Activated CD8-positive, alpha-beta T cell treated with anti-CD3 and anti-CD28 coated beads for 36 hours (primary cell): ENCODE measurements at regions of chr11 and their contacts with region 1.

Region 1: GRCh38 chr11:128630367-128631230 is 43.2 kb upstream of the ETS1 start:
- DNase-seq: peak; percentile 94
- ATAC-seq: peak; percentile 71
- H3K4me3 Mint-ChIP-seq: peak overlapping the region; percentile 72
- H3K27ac Mint-ChIP-seq: peak overlapping the region; percentile 97
- H3K4me1 Mint-ChIP-seq: peaks cover 66% of the 10 kb centered on the region
- H3K27me3 Mint-ChIP-seq: no peaks in the 10 kb centered on the region
- CTCF ChIP-seq: peak; percentile 72

Region 2: GRCh38 chr11:128172046-128172878 is 458.3 kb before region 1 on chr11:
- CTCF ChIA-PET with region 1: interaction called, 139 read pairs
- POLR2A ChIA-PET with region 1: interaction called, 3 read pairs
- intact Hi-C with region 1: loop called (anchors 1 kb)
- DNase-seq: peak; percentile 96
- ATAC-seq: peak; percentile 81
- H3K4me3 Mint-ChIP-seq: no peak overlapping the region
- H3K27ac Mint-ChIP-seq: no peak overlapping the region
- H3K4me1 Mint-ChIP-seq: peaks cover 16% of the 10 kb centered on the region
- H3K27me3 Mint-ChIP-seq: no peaks in the 10 kb centered on the region
- CTCF ChIP-seq: peak; percentile 69

Region 3: GRCh38 chr11:128290106-128290840 is 340.3 kb before region 1 on chr11:
- CTCF ChIA-PET with region 1: interaction called, 91 read pairs
- POLR2A ChIA-PET with region 1: interaction called, 23 read pairs
- intact Hi-C with region 1: loop called (anchors 2 kb)
- DNase-seq: peak; percentile 87
- ATAC-seq: peak; percentile 62
- H3K4me3 Mint-ChIP-seq: peak overlapping the region; percentile 83
- H3K27ac Mint-ChIP-seq: peak overlapping the region; percentile 95
- H3K4me1 Mint-ChIP-seq: peaks cover 94% of the 10 kb centered on the region
- H3K27me3 Mint-ChIP-seq: no peaks in the 10 kb centered on the region
- CTCF ChIP-seq: peak; percentile 88

Region 4: DNA sequence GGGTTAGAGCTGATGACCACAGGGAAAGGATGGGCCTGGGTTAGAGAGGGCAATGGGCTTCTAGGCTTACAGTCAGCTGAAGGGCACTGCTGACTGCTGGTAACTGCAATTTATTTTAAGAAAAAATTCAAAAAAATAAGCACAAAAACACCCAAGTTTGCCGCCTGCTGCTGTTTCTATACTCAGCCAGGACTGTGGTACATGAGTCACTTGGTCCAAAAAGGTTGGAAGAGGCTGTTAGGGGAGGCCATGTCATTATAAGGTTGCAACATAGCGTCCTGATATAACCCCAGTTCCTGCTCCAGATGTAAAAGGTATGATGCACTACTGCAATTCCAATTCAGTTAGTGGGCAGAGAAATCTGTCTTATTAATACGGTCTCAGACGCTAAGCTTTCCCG is 142.1 kb before region 1 on chr11:
- CTCF ChIA-PET with region 1: interaction called, 7 read pairs
- POLR2A ChIA-PET with region 1: interaction called, 12 read pairs
- intact Hi-C with region 1: no loop called
- DNase-seq: peak; percentile 69
- ATAC-seq: peak; percentile 63
- H3K4me3 Mint-ChIP-seq: peak overlapping the region; percentile 47
- H3K27ac Mint-ChIP-seq: peak overlapping the region; percentile 98
- H3K4me1 Mint-ChIP-seq: peaks cover 94% of the 10 kb centered on the region
- H3K27me3 Mint-ChIP-seq: no peaks in the 10 kb centered on the region
- CTCF ChIP-seq: no peak

Region 5: GRCh38 chr11:128530118-128531074 is 100.2 kb before region 1 on chr11:
- CTCF ChIA-PET with region 1: interaction called, 67 read pairs
- POLR2A ChIA-PET with region 1: interaction called, 42 read pairs
- intact Hi-C with region 1: no loop called
- DNase-seq: peak; percentile 33
- ATAC-seq: no peak
- H3K4me3 Mint-ChIP-seq: no peak overlapping the region
- H3K27ac Mint-ChIP-seq: peak overlapping the region; percentile 26
- H3K4me1 Mint-ChIP-seq: peaks cover 59% of the 10 kb centered on the region
- H3K27me3 Mint-ChIP-seq: no peaks in the 10 kb centered on the region
- CTCF ChIP-seq: no peak

Region 6: DNA sequence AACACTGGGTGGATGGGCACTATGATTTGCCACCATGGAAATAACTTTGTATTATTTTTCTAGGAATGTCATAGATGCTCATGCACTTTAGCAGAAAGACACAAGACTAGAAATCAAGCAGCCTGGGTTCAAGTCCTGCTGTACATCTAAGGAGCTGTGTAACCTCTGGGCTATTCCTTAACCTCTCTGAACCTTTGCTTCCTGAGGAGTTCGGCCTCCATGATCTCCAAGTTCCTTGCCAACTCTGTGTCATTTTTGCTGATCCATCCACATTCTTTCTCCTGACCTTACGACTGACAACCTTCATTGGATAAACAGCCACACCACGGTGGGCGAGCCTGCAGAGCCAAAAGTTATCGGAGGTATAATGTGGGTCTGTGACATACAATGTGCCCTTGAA is 67.3 kb before region 1 on chr11:
- CTCF ChIA-PET with region 1: no interaction called
- POLR2A ChIA-PET with region 1: no interaction called
- intact Hi-C with region 1: no loop called
- DNase-seq: no peak
- ATAC-seq: no peak
- H3K4me3 Mint-ChIP-seq: no peak overlapping the region
- H3K27ac Mint-ChIP-seq: no peak overlapping the region
- H3K4me1 Mint-ChIP-seq: peaks cover 24% of the 10 kb centered on the region
- H3K27me3 Mint-ChIP-seq: no peaks in the 10 kb centered on the region
- CTCF ChIP-seq: no peak

Region 7: DNA sequence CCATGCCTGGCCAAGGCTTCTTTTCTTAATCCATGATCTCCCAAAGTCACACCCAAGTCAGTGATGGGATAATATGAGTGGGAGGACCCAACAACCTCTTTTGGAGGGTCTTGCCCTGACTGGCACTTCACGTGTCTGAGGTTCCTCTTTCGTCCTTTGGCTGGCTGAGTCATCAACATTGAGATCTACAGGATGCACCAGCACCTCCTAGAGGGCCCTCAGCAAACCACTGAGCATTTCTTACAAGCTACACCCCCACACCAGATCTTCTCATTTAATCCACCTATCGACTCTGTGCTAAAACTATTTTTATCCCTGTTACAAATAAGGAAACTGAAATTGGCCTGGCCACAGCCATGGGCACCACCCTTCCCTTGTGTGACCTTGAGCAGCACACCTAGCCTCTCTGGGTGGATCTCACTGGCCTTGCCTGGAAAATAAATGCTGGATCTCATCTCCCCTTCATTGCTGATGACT is 126.7 kb after region 1 on chr11:
- CTCF ChIA-PET with region 1: interaction called, 80 read pairs
- POLR2A ChIA-PET with region 1: interaction called, 3 read pairs
- intact Hi-C with region 1: loop called (anchors 5 kb)
- DNase-seq: peak; percentile 88
- ATAC-seq: peak; percentile 81
- H3K4me3 Mint-ChIP-seq: peak overlapping the region; percentile 23
- H3K27ac Mint-ChIP-seq: peak overlapping the region; percentile 94
- H3K4me1 Mint-ChIP-seq: peaks cover 83% of the 10 kb centered on the region
- H3K27me3 Mint-ChIP-seq: no peaks in the 10 kb centered on the region
- CTCF ChIP-seq: peak; percentile 70

Region 8: GRCh38 chr11:128928400-128928799 is 297.8 kb after region 1 on chr11:
- CTCF ChIA-PET with region 1: no interaction called
- POLR2A ChIA-PET with region 1: no interaction called
- intact Hi-C with region 1: no loop called
- DNase-seq: peak; percentile 29
- ATAC-seq: peak; percentile 60
- H3K4me3 Mint-ChIP-seq: no peak overlapping the region
- H3K27ac Mint-ChIP-seq: no peak overlapping the region
- H3K4me1 Mint-ChIP-seq: peaks cover 11% of the 10 kb centered on the region
- H3K27me3 Mint-ChIP-seq: no peaks in the 10 kb centered on the region
- CTCF ChIP-seq: no peak